IMR-90 (cell line): ENCODE measurements at regions of chr20 and their contacts with region 1.

Region 1: GRCh38 chr20:11917663-11918062 is at the start of gene BTBD3:
- DNase-seq: peak; percentile 79
- ATAC-seq: peak; percentile 96
- H3K4me3 ChIP-seq: peak within 1 kb of the TSS; percentile 45
- H3K27ac ChIP-seq: peak within 1 kb of the TSS; percentile 29; the same call in 1 of the 2 replicates
- H3K4me1 ChIP-seq: peaks cover 8% of the 10 kb centered on the region
- H3K27me3 ChIP-seq: no peaks in the 10 kb centered on the region
- CTCF ChIP-seq: no peak
- POLR2A ChIP-seq: peak; percentile 62; the same call in 1 of the 2 replicates
- RAD21 ChIP-seq: peak; percentile 23; the same call in 1 of the 2 replicates
- total RNA-seq, gene BTBD3: 44.6 and 44.7 TPM in 2 replicates

Region 2: DNA sequence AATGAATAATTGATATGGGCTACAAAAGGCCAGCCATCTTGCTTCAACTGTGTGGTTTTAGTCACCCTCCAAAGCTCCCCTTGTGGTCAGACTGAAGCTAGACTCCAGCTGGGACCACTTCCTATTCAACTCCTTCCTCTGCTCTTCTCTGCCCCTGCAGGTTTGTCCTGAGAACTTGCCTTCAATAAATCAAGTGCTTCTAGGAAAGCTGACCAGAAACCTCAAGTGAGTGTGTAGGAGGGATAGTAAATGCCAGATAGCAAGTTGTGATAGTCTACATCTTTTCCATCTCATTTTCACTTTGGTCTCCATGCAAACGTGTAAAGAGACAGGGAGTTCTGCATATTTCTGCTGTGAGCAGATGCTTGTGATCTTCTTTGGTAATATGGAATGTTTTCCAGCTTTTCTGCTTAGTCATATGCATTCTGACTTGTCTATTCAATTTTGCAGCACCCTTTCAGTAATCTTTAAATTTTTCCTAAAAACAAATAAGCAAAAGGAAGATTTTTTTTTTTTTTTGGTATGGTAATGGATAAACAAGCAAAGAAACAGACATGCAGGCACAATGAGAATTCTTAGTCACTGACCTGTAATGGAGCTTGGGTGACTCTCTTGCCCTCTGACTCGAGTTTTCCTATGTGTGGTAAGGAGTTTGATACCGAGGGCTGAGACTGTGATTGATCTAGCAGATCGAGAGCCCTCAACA is 201.3 kb before region 1 on chr20:
- CTCF ChIA-PET with region 1: no interaction called
- POLR2A ChIA-PET with region 1: no interaction called
- dilution Hi-C with region 1: no loop called
- in situ Hi-C with region 1: no loop called
- intact Hi-C with region 1: loop called (anchors 5 kb)
- DNase-seq: peak; percentile 90
- ATAC-seq: peak; percentile 86
- H3K4me3 ChIP-seq: no peak overlapping the region
- H3K27ac ChIP-seq: peak overlapping the region; percentile 31; the same call in 1 of the 2 replicates
- H3K4me1 ChIP-seq: peaks cover 8% of the 10 kb centered on the region; the same call in 1 of the 2 replicates
- H3K27me3 ChIP-seq: peaks cover 5% of the 10 kb centered on the region; the same call in 1 of the 2 replicates
- CTCF ChIP-seq: peak; percentile 68
- POLR2A ChIP-seq: no peak
- RAD21 ChIP-seq: peak; percentile 36; the same call in 1 of the 2 replicates